Left colon (tissue), 2 donors: ENCODE measurements at regions of chr1 and their contacts with region 1.

Region 1: GRCh38 chr1:204989266-204990058 is 53.5 kb upstream of the CNTN2 start:
- DNase-seq: peak in 1 of 2 donors; percentile 61
- ATAC-seq: peak; percentile 90

Region 2: DNA sequence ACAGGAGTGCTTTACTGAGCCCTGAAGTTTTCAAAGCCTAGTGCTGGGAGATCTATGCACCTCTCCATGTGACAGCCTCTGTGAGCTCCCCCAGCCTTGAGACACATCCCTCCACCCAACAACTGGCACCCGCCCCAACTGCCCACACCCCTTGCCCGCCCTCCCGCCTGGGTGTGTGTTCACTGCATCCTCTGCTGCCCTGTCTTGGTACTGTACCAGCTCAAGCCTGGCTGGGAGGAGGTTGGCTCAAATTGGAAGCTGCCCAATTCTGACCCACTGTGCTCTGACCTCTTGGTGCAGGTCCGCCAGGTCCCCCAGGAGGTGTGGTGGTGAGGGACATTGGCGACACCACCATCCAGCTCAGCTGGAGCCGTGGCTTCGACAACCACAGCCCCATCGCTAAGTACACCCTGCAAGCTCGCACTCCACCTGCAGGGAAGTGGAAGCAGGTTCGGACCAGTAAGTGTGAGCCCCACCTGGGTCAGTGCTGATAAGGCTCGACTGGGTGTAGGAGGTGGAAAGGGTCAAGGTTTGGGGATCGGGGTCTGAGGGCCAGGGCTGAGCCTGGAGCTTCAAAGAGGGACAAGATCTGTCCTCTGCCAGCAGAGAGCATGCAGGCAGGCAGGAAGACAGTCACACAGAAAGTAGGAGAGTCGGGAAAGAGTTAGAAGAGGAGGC is 76.8 kb after region 1 on chr1:
- intact Hi-C with region 1: loop called (anchors 5 to 10 kb)
- DNase-seq: no peak
- ATAC-seq: peak; percentile 61

Region 3: GRCh38 chr1:205077158-205077933 is 87.9 kb after region 1 on chr1:
- intact Hi-C with region 1: loop called in 1 of 2 experiments (anchors 10 kb)
- DNase-seq: no peak
- ATAC-seq: no peak